ENCODE measurements at regions of chr11 and their contacts with region 1.

Region 1: DNA sequence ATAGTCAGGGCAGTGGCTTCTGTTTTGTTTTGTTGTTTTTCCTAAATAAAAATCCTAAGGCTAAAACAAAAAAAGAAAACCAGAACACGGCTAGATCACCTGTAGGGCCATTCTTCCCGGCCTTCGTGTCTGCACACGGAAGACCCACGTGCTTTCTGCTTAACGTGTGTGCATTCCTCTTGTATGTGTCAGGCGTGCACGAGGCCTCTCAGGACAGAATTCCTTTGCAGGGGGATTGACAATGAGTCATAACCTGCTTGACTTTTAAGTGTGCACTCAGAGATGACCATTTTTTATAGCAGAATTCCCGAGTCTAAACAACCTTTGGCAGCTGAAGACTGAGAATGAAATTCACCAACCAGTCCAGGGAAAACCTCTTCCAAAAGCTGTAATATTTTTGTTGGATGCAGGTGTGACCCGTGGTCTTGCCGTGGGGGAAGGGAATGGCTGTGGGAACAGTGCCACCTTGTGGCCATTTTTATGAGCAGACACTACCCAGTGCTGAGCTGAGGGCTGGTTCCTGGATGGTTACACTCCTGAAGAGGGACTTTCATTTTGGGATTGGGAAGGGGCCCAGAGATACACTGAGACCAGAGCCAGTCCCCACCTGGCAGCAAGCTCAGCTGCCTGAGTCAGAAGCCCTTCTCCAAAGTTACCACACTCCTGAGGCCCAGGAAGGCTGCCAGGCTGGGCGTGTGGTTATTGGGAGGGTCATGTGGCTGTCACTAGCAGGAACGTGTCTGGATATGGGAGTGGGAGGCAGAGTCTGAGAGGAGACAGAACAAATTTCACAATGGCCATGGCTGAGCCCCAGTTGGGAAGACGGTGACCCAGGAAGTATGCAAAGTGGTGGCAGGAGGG is 35.8 kb upstream of the DKK3 start:
- DNase-seq: peak; percentile 91 to 93
- H3K4me3 ChIP-seq: no peak overlapping the region
- H3K27ac ChIP-seq: peak overlapping the region; percentile 78 to 93 (median 93)
- H3K4me1 ChIP-seq: peaks cover 14 to 26% of the 10 kb centered on the region in 2 donors
- H3K27me3 ChIP-seq: no peaks in the 10 kb centered on the region
- CTCF ChIP-seq: peak; percentile 51 to 94 (median 80)
- POLR2A ChIP-seq: peak in 1 of 2 donors; percentile 22

Region 2: DNA sequence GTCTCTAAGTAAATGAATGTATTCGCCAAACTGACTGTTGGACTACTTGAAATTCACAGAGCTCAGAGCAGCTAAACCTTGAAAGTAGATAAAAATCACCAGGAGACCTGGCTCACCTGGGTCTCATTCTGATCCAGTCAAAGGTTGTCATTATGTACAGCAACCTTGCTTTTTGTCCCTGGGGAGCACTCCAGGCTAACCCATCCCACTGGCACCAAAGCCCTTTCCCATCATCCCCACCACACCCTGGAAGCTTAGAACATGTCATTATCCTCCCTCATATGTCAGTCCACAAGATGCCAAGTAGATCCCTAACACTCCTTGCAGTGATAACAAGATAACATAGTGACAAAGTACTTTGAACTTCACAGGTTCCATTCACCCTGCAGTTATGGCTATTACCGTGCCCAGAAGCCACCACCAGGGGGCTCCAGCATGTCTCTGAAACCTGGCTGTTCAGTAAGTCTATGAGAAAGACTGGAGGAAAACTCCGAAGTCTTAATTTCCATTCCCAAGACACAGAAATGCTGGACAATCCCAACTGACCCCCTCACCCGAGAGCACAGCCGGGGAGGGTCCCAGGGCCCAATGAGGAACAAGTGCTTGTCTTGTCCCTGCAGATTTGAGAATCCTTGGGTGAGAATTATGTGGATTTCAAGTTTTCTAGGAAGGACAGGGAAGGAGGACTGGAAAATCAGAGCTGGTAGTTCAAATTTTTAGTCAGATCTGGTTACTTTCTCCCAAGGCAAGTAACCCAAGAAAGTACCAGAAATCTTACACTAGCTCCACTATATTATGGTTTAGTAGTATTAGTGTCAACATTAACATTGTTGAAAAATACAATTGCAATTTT is 245.4 kb before region 1 on chr11:
- intact Hi-C with region 1: loop called (anchors 10 kb)
- DNase-seq: peak; percentile 70 to 91
- H3K4me3 ChIP-seq: no peak overlapping the region
- H3K27ac ChIP-seq: no peak overlapping the region
- H3K4me1 ChIP-seq: no peaks in the 10 kb centered on the region
- H3K27me3 ChIP-seq: no peaks in the 10 kb centered on the region
- CTCF ChIP-seq: peak; percentile 65 to 87 (median 78)
- POLR2A ChIP-seq: no peak

Region 3: GRCh38 chr11:11931461-11932055 is 112.6 kb before region 1 on chr11:
- intact Hi-C with region 1: loop called (anchors 10 kb)
- DNase-seq: no peak
- H3K4me3 ChIP-seq: no peak overlapping the region
- H3K27ac ChIP-seq: no peak overlapping the region
- H3K4me1 ChIP-seq: no peaks in the 10 kb centered on the region
- H3K27me3 ChIP-seq: no peaks in the 10 kb centered on the region
- CTCF ChIP-seq: peak in 5 of 6 experiments; percentile 33 to 61 (median 60)
- POLR2A ChIP-seq: no peak

Region 4: DNA sequence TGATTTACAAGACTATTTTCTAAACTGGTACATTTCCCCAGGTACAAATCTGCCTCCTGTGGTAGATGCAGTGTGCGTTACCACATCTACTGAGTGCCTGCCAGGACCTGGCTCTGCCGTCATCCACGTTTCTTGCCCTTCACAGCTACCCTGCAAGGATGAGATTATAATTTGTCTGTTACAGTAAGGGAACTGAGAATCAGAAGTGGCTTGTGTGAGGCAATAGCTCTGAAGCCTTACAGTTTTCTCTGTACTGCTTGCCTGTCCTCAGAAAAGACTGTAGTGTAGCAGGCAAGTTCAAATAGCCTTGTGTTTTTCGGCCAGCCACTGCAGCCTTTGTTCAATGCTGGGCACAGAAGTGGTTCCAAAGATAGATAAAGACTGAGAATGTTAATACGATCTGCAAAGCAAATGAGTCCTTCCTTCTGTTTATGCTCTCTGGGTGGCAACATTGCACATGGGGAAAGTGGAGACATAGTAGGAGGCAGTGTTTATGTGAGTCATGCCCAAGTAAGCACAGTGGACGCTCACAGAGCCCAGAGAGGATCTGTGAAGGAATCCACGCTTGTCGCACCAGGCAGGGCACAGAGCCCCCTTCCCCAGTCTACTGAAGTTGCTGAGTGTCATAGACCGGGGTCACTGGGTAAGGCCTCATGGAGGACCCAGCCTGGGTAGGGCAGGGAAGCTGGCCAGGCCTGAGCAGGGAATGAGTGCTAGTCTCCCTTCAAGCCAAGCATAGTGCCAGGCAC is 115.3 kb after region 1 on chr11:
- intact Hi-C with region 1: no loop called
- DNase-seq: no peak
- H3K4me3 ChIP-seq: no peak overlapping the region
- H3K27ac ChIP-seq: peak overlapping the region in 2 of 3 donors; percentile 64 to 69
- H3K4me1 ChIP-seq: peaks cover 25 to 51% of the 10 kb centered on the region in 2 donors
- H3K27me3 ChIP-seq: no peaks in the 10 kb centered on the region
- CTCF ChIP-seq: no peak
- POLR2A ChIP-seq: no peak

Region 5: DNA sequence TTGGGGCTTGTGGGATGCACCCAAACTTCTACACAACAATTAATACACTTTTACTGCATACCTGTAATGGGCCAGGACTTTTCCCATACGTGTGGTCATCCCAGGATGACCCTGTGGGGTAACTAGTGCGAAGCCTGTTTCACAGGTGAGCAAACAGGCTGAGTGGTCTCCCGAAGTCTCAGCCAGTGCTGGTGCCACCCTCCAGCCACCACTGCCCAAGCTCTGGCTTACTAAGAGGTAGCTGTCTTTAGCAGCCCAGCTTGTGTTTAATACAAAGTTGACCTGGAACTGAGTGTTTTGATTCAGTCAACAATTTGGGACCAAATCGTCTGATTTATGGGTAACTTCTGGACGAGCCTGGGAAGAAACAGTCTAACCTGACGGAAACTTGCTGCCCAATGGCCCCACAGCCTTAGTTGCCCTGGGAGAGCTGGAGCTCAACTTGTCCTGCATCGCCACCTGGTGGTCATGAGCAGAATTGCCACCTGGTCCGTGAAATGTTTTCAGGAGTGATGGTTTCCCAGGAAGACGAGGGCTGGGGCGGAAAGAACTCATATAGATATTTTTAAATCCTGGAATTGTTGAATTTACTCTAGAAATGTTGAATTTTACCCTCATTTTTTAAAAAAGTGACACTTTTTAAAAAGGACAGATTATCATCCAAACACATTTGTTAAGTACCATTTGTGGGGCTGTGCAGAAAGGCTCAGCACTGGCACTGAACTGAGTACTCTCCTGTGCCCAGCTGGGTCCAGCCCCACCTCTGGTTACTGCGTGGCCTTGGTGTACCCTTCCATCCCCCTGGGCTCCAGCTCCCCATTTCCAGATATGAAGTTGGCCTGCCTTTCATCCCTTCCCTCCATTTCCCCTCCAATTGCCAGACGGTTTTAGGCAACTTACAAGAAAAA is 237.6 kb after region 1 on chr11:
- intact Hi-C with region 1: loop called (anchors 2 kb)
- DNase-seq: peak; percentile 86
- H3K4me3 ChIP-seq: no peak overlapping the region
- H3K27ac ChIP-seq: peak overlapping the region in 1 of 3 donors; percentile 84
- H3K4me1 ChIP-seq: peaks cover 13 to 14% of the 10 kb centered on the region in 2 donors
- H3K27me3 ChIP-seq: no peaks in the 10 kb centered on the region
- CTCF ChIP-seq: peak; percentile 91 to 99 (median 97)
- POLR2A ChIP-seq: no peak

Measured in thyroid gland (tissue), 4 donors.